B cell (primary cell): ENCODE measurements at regions of chr15 and their contacts with region 1.

Region 1: GRCh38 chr15:43133430-43134156 is at the start of gene TMEM62:
- DNase-seq: peak; percentile 91
- ATAC-seq: peak; percentile 92
- H3K4me3 ChIP-seq: peak within 1 kb of the TSS; percentile 59 to 91 (median 76)
- H3K4me3 Mint-ChIP-seq: peak within 1 kb of the TSS; percentile 98
- H3K27ac ChIP-seq: peak within 1 kb of the TSS; percentile 47 to 85
- H3K27ac Mint-ChIP-seq: peak within 1 kb of the TSS; percentile 94
- H3K4me1 ChIP-seq: peaks cover 18 to 21% of the 10 kb centered on the region in 2 donors
- H3K4me1 Mint-ChIP-seq: peaks cover 24% of the 10 kb centered on the region
- H3K27me3 ChIP-seq: no peaks in the 10 kb centered on the region
- H3K27me3 Mint-ChIP-seq: no peaks in the 10 kb centered on the region
- CTCF ChIP-seq: peak; percentile 27
- total RNA-seq, gene TMEM62: 65.3 and 74.4 TPM in 2 replicates

Region 2: DNA sequence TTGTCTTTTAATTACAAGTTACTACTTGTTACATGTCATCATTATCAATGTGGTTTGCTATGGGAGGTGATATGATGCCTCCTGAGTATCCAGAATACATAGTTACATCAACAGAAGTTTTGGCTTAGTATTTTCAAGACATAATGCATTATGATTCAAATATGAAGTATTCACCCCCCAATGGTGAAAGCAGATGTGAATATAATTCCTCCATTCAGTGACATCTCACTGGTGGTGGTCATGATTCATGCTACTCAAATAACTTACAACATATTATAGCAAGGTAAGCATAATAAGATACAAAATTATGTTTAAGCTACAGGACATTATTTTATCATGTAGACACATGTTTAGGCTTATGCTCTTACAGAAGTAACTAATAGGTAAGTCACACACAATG is 178.1 kb before region 1 on chr15:
- CTCF ChIA-PET with region 1: no interaction called
- POLR2A ChIA-PET with region 1: no interaction called
- intact Hi-C with region 1: no loop called
- DNase-seq: no peak
- ATAC-seq: no peak
- H3K4me3 ChIP-seq: no peak overlapping the region
- H3K4me3 Mint-ChIP-seq: no peak overlapping the region
- H3K27ac ChIP-seq: no peak overlapping the region
- H3K27ac Mint-ChIP-seq: no peak overlapping the region
- H3K4me1 ChIP-seq: no peaks in the 10 kb centered on the region
- H3K4me1 Mint-ChIP-seq: no peaks in the 10 kb centered on the region
- H3K27me3 ChIP-seq: no peaks in the 10 kb centered on the region
- H3K27me3 Mint-ChIP-seq: no peaks in the 10 kb centered on the region
- CTCF ChIP-seq: no peak

Region 3: DNA sequence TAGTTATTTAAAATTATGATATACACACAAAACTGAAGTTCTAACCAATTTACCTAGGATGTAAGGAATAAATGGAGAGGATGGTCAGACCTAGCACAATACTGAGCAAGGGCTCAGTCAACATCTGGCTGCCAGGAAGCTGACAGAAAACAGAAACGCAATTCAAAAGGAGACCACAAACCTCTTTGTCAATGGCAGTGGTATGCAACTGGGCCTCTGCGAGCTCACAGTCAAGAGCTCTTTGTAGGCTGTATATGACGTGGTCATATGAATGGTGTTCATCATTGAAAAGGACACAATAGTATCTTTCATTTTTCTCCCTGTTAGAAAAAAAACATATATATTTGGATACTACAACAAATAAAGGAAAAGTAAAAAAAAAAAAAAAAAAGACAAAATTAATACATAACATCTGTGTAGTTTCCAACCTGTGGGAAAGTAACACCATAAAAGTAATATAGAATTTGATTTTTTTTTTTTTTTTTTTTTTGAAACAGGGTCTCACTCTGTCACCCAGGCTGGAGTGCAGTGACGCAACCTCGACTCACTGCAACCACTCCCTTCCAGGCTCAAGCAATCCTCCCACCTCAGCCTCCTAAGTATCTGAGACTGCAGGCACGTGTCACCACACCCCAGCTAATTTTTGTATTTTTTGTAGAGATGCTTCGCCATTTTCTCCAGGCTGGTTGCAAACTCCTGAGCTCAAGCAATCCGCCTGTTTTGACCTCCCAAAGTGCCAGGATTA is 65.7 kb before region 1 on chr15:
- CTCF ChIA-PET with region 1: no interaction called
- POLR2A ChIA-PET with region 1: no interaction called
- intact Hi-C with region 1: no loop called
- DNase-seq: no peak
- ATAC-seq: no peak
- H3K4me3 ChIP-seq: no peak overlapping the region
- H3K4me3 Mint-ChIP-seq: no peak overlapping the region
- H3K27ac ChIP-seq: no peak overlapping the region
- H3K27ac Mint-ChIP-seq: no peak overlapping the region
- H3K4me1 ChIP-seq: no peaks in the 10 kb centered on the region
- H3K4me1 Mint-ChIP-seq: no peaks in the 10 kb centered on the region
- H3K27me3 ChIP-seq: no peaks in the 10 kb centered on the region
- H3K27me3 Mint-ChIP-seq: no peaks in the 10 kb centered on the region
- CTCF ChIP-seq: no peak

Region 4: GRCh38 chr15:43086551-43086950 is 47.0 kb before region 1 on chr15:
- CTCF ChIA-PET with region 1: no interaction called
- POLR2A ChIA-PET with region 1: no interaction called
- intact Hi-C with region 1: loop called (anchors 5 kb)
- DNase-seq: no peak
- ATAC-seq: no peak
- H3K4me3 ChIP-seq: no peak overlapping the region
- H3K4me3 Mint-ChIP-seq: no peak overlapping the region
- H3K27ac ChIP-seq: no peak overlapping the region
- H3K27ac Mint-ChIP-seq: peak overlapping the region; percentile 34
- H3K4me1 ChIP-seq: no peaks in the 10 kb centered on the region
- H3K4me1 Mint-ChIP-seq: peaks cover 17% of the 10 kb centered on the region
- H3K27me3 ChIP-seq: no peaks in the 10 kb centered on the region
- H3K27me3 Mint-ChIP-seq: no peaks in the 10 kb centered on the region
- CTCF ChIP-seq: no peak

Region 5: DNA sequence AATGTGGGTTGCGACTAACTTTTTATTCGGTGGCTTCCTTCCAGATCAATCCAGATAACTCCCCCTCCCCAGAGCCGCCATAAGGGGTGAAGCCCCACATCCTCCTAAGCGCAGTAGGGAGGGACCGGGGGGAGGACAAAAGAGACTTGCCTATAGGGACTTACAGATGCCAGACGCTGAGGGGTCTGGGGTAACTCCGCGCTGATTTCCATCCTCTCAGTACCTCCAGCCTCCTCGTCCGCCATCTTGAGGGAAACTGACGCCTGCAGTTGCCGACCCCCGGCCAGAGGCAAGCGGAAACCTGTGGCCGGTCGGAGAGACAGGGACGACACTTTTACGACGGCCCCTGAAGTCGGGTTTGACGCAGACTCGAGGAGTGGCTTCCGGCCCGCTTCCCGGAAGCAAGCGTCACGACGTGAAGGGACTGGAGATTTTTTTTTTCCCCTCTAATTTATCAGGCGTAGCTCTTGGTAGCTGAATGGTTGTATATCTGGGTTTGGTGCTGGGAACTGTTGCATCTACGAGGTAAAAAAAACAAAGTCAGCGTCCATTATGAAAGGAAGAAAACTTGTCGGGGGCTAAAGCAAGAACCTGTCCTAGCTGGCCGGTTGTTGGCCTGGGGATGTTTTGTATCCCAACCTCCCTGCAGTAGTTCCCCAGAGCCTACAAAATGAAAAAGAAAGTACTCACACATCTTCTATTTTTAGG is 27.7 kb before region 1 on chr15 and contains the start of gene UBR1:
- CTCF ChIA-PET with region 1: interaction called, 3 read pairs
- POLR2A ChIA-PET with region 1: interaction called, 10 read pairs
- intact Hi-C with region 1: loop called (anchors 1 kb)
- DNase-seq: peak; percentile 94
- ATAC-seq: peak; percentile 94
- H3K4me3 ChIP-seq: peak within 1 kb of the TSS; percentile 55 to 99 (median 87)
- H3K4me3 Mint-ChIP-seq: peak within 1 kb of the TSS; percentile 89
- H3K27ac ChIP-seq: peak within 1 kb of the TSS; percentile 90 to 96
- H3K27ac Mint-ChIP-seq: peak within 1 kb of the TSS; percentile 98
- H3K4me1 ChIP-seq: peaks cover 21 to 22% of the 10 kb centered on the region in 2 donors
- H3K4me1 Mint-ChIP-seq: peaks cover 49% of the 10 kb centered on the region
- H3K27me3 ChIP-seq: no peaks in the 10 kb centered on the region
- H3K27me3 Mint-ChIP-seq: no peaks in the 10 kb centered on the region
- CTCF ChIP-seq: no peak
- total RNA-seq, gene UBR1: 60.7 and 66.7 TPM in 2 replicates

Region 6: DNA sequence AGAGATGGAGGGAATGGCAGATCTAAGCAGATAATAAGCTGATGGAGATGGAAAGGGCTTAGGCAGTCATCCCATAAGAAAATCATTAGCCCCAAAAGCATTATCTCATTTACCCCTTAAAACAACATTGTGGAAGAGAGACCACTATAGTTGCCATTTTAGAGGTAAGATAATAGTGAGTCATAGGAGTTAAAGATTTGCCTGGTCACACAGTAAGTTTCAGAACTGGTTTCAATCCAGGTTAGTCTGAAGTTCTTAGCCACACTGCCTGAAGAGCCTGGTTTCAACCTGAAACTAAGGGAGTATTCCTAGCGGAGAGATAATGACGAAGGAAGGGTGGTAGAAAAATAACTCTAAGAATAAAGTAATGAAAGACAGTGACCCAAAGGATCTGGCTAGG is 14.8 kb before region 1 on chr15:
- CTCF ChIA-PET with region 1: interaction called, 4 read pairs
- POLR2A ChIA-PET with region 1: interaction called, 7 read pairs
- intact Hi-C with region 1: loop called (anchors 1 kb)
- DNase-seq: no peak
- ATAC-seq: no peak
- H3K4me3 ChIP-seq: peak overlapping the region in 1 of 5 experiments; percentile 33
- H3K4me3 Mint-ChIP-seq: peak overlapping the region; percentile 15
- H3K27ac ChIP-seq: peak overlapping the region; percentile 60 to 68
- H3K27ac Mint-ChIP-seq: peak overlapping the region; percentile 87
- H3K4me1 ChIP-seq: peaks cover 27 to 37% of the 10 kb centered on the region in 2 donors
- H3K4me1 Mint-ChIP-seq: peaks cover 36% of the 10 kb centered on the region
- H3K27me3 ChIP-seq: no peaks in the 10 kb centered on the region
- H3K27me3 Mint-ChIP-seq: no peaks in the 10 kb centered on the region
- CTCF ChIP-seq: no peak

Region 7: DNA sequence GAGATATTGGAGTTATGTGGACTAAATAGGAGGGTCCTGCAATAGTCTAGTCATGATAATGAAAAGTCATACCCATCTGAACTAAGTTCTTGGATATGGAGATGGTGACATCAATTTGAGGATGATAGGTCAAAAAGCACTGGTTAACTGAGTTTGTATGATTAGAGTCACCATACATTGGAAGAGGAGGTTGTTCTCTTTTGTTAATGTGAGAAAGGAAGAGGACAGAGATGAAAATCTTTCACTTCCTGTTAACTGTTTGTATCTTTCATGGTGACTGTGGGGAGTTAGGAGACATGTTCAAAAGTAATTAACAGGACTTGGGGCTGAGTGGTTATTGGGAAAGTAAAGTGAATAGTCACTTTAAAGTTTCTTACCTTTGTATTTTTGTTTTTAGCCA is 10.9 kb after region 1 on chr15:
- CTCF ChIA-PET with region 1: interaction called, 3 read pairs
- POLR2A ChIA-PET with region 1: no interaction called
- intact Hi-C with region 1: loop called (anchors 1 kb)
- DNase-seq: peak; percentile 35
- ATAC-seq: peak; percentile 43
- H3K4me3 ChIP-seq: peak overlapping the region in 1 of 5 experiments; percentile 11
- H3K4me3 Mint-ChIP-seq: no peak overlapping the region
- H3K27ac ChIP-seq: peak overlapping the region in 1 of 2 donors; percentile 26
- H3K27ac Mint-ChIP-seq: no peak overlapping the region
- H3K4me1 ChIP-seq: peaks cover 16 to 17% of the 10 kb centered on the region in 2 donors
- H3K4me1 Mint-ChIP-seq: peaks cover 15% of the 10 kb centered on the region
- H3K27me3 ChIP-seq: no peaks in the 10 kb centered on the region
- H3K27me3 Mint-ChIP-seq: no peaks in the 10 kb centered on the region
- CTCF ChIP-seq: no peak

Region 8: DNA sequence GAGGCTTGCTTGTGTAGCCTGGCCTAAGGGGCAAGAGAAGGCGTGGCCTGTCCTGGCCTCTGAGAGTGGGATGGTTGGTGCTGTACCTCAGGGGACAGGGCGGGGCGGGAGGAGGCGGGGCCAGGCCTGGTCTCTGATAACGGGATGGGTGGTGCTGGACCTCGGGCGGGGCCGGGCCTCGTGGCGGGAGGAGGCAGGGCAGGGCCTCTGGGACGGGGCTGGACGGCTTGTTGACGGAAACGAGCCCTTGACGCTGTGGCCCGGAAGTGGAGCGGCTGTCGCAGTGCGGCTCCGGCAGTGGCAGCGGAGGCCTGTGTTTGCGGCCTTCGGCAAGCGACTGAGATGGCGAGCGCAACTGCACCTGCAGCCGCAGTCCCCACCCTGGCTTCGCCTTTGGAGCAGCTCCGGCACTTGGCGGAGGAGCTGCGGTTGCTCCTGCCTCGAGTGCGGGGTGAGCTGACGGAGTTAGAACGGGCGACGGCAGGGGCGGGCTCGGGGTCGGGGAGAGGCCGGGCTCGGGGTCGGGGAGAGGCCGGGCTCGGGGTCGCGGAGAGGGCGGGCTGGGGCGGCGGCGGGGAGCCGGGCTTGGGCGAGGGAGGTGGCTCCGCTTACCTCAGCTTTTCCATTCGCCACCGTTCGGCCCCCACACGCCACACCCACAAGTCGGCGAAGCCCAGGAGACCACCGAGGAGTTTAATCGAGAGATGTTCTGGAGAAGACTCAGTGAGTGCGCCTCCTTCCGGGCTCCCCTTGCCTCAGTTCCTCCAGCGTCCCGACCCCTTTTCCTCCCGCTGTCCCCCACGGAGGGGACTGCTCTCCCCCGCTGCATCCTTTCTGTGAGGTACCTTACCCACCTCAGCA is 51.8 kb after region 1 on chr15 and contains the start of gene CCNDBP1:
- CTCF ChIA-PET with region 1: no interaction called
- POLR2A ChIA-PET with region 1: no interaction called
- intact Hi-C with region 1: loop called (anchors 1 kb)
- DNase-seq: peak; percentile 92
- ATAC-seq: peak; percentile 93
- H3K4me3 ChIP-seq: peak within 1 kb of the TSS; percentile 43 to 94 (median 75)
- H3K4me3 Mint-ChIP-seq: peak within 1 kb of the TSS; percentile 99
- H3K27ac ChIP-seq: peak within 1 kb of the TSS; percentile 87 to 94
- H3K27ac Mint-ChIP-seq: peak within 1 kb of the TSS; percentile 98
- H3K4me1 ChIP-seq: peaks cover 21 to 32% of the 10 kb centered on the region in 2 donors
- H3K4me1 Mint-ChIP-seq: peaks cover 38% of the 10 kb centered on the region
- H3K27me3 ChIP-seq: no peaks in the 10 kb centered on the region
- H3K27me3 Mint-ChIP-seq: no peaks in the 10 kb centered on the region
- CTCF ChIP-seq: peak; percentile 67
- total RNA-seq, gene CCNDBP1: 113 and 116 TPM in 2 replicates